Sigmoid colon (tissue), 7 donors: ENCODE measurements at regions of chr1 and their contacts with region 1.

Region 1: GRCh38 chr1:18597160-18598042 is 33.2 kb upstream of the PAX7 start:
- DNase-seq: peak; percentile 77
- H3K4me3 ChIP-seq: no peak overlapping the region
- H3K27ac ChIP-seq: no peak overlapping the region
- H3K4me1 ChIP-seq: peaks cover 0 to 11% (median 9%) of the 10 kb centered on the region in 4 donors
- H3K27me3 ChIP-seq: peaks cover 0 to 33% (median 0%) of the 10 kb centered on the region in 3 donors
- CTCF ChIP-seq: peak; percentile 69 to 97 (median 90)
- EP300 ChIP-seq: no peak
- POLR2A ChIP-seq: no peak

Region 2: DNA sequence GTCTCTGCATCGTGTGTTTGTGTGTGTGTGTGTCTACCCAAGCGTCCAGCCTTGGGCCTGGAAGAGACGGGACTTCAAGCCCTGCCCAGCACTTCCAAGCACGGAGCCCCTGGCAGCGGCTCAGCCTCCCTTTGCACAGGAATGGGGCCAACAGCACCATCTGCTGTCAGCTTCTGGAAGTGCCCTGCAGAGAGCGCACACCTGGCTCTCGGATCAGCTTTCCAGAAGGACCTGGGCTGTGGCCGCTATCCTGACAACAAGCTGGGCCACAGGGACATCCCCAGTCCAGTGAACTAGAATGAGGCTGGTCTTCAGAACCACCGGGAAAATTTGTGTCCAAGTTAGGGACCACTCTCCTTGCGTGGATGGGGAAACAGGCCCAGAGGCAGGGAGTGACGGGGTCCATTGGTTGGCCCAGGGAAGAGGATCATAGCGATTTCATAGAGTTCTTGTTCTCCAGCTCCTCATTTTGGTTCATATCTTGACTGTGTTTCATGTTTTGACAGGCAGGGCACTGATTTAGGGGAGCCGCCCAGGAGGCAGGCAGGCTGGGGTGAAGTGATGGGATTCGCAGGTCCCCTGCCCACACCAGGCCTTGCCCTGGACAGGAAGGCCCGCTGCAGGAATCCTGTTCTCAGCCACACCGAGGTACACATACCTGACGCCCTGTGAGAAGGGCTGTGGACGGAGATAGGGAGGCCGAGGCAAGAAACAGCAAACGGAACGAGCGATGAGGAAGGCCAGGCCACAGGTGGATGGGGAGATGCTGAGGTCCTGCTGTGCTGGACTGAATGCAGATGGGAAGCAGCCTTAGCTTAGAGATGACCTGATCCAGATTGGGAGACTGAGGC is 223.6 kb after region 1 on chr1:
- intact Hi-C with region 1: loop called (anchors 1 kb)
- DNase-seq: peak; percentile 86
- H3K4me3 ChIP-seq: no peak overlapping the region
- H3K27ac ChIP-seq: no peak overlapping the region
- H3K4me1 ChIP-seq: peaks cover 0 to 5% (median 0%) of the 10 kb centered on the region in 4 donors
- H3K27me3 ChIP-seq: peaks cover 4 to 49% (median 27%) of the 10 kb centered on the region in 3 donors
- CTCF ChIP-seq: peak; percentile 65 to 91 (median 81)
- EP300 ChIP-seq: no peak
- POLR2A ChIP-seq: no peak

Region 3: GRCh38 chr1:18875107-18875795 is 277.9 kb after region 1 on chr1:
- intact Hi-C with region 1: loop called (anchors 2 kb)
- DNase-seq: peak; percentile 88
- H3K4me3 ChIP-seq: no peak overlapping the region
- H3K27ac ChIP-seq: no peak overlapping the region
- H3K4me1 ChIP-seq: peaks cover 0 to 13% (median 0%) of the 10 kb centered on the region in 4 donors
- H3K27me3 ChIP-seq: no peaks in the 10 kb centered on the region
- CTCF ChIP-seq: peak; percentile 20 to 79 (median 60)
- EP300 ChIP-seq: no peak
- POLR2A ChIP-seq: no peak